ENCODE measurements at regions of chr21 and their contacts with region 1.

Region 1: GRCh38 chr21:41283211-41283818 is 33.3 kb upstream of the FAM3B start:
- DNase-seq: peak; percentile 72
- ATAC-seq: peak; percentile 92
- H3K4me3 Mint-ChIP-seq: no peak overlapping the region
- H3K27ac Mint-ChIP-seq: no peak overlapping the region
- H3K4me1 Mint-ChIP-seq: no peaks in the 10 kb centered on the region
- H3K27me3 Mint-ChIP-seq: peaks cover 14% of the 10 kb centered on the region

Region 2: GRCh38 chr21:41064334-41064791 is 219.0 kb before region 1 on chr21:
- CTCF ChIA-PET with region 1: no interaction called
- POLR2A ChIA-PET with region 1: no interaction called
- DNase-seq: no peak
- ATAC-seq: no peak
- H3K4me3 Mint-ChIP-seq: no peak overlapping the region
- H3K27ac Mint-ChIP-seq: no peak overlapping the region
- H3K4me1 Mint-ChIP-seq: peaks cover 7% of the 10 kb centered on the region
- H3K27me3 Mint-ChIP-seq: peaks cover 14% of the 10 kb centered on the region

Region 3: GRCh38 chr21:41294539-41295231 is 11.4 kb after region 1 on chr21:
- CTCF ChIA-PET with region 1: interaction called, 18 read pairs
- POLR2A ChIA-PET with region 1: no interaction called
- DNase-seq: no peak
- ATAC-seq: no peak
- H3K4me3 Mint-ChIP-seq: no peak overlapping the region
- H3K27ac Mint-ChIP-seq: no peak overlapping the region
- H3K4me1 Mint-ChIP-seq: peaks cover 13% of the 10 kb centered on the region
- H3K27me3 Mint-ChIP-seq: peaks cover 33% of the 10 kb centered on the region

Region 4: GRCh38 chr21:41361786-41362604 is 78.7 kb after region 1 on chr21 and contains the start of gene MX2:
- CTCF ChIA-PET with region 1: interaction called, 19 read pairs
- POLR2A ChIA-PET with region 1: no interaction called
- DNase-seq: peak; percentile 91
- ATAC-seq: peak; percentile 84
- H3K4me3 Mint-ChIP-seq: peak within 1 kb of the TSS; percentile 89
- H3K27ac Mint-ChIP-seq: peak within 1 kb of the TSS; percentile 100
- H3K4me1 Mint-ChIP-seq: peaks cover 76% of the 10 kb centered on the region
- H3K27me3 Mint-ChIP-seq: no peaks in the 10 kb centered on the region
- total RNA-seq, gene MX2: 56.0 to 58.6 TPM

Region 5: DNA sequence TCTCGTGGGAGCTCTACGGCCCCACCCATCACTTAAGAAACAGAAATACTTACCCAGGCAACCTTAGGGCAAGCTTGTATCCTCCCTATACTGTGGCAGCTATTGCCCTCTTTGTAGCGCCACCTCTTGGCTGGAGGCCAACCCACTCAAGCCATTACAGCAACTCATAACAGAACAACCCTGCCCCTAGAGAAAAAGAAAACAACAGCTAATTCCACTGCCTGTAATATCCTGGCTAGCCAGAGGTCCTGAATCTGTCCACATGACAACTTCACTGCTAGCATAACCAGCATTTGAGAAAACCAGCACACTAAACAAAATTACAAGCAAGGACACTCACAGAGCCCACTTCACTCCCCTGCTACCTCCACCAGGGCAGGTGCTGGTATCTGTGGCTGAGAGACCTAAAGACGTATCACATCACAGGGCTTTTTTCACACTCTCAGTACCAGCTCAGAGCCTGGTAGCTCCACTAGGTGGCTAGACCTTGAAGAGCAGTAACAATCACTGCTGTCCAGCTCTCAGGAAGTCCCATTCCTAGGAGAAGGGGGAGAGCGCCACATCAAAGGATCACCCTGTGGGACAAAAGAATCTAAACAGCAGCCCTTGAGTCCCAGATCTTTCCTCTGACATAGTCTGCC is 128.3 kb after region 1 on chr21:
- CTCF ChIA-PET with region 1: interaction called, 24 read pairs
- POLR2A ChIA-PET with region 1: no interaction called
- DNase-seq: no peak
- ATAC-seq: peak; percentile 53
- H3K4me3 Mint-ChIP-seq: no peak overlapping the region
- H3K27ac Mint-ChIP-seq: no peak overlapping the region
- H3K4me1 Mint-ChIP-seq: peaks cover 14% of the 10 kb centered on the region
- H3K27me3 Mint-ChIP-seq: peaks cover 22% of the 10 kb centered on the region

Region 6: DNA sequence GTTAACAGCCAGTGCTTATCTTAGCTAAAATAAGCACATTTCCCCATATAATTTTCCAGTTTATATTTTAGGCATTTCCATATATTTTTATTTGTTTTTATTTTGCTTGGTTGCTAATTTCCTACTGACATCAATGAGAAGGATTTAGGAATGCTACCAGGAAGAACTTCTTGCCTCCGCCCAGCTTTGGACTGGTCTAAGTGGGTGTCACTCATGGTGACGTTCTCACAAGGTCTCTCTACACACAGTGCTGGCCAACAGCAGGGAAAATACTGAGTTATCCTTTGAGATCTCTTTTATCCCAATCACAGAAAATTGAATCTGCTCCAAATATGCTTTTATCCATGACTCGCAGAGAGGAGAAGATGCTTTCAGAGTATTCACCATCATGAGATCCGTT is 155.9 kb after region 1 on chr21:
- CTCF ChIA-PET with region 1: interaction called, 12 read pairs
- POLR2A ChIA-PET with region 1: interaction called, 4 read pairs
- DNase-seq: no peak
- ATAC-seq: no peak
- H3K4me3 Mint-ChIP-seq: no peak overlapping the region
- H3K27ac Mint-ChIP-seq: no peak overlapping the region
- H3K4me1 Mint-ChIP-seq: peaks cover 52% of the 10 kb centered on the region
- H3K27me3 Mint-ChIP-seq: no peaks in the 10 kb centered on the region

Region 7: GRCh38 chr21:41460578-41461527 is 177.5 kb after region 1 on chr21:
- CTCF ChIA-PET with region 1: interaction called, 32 read pairs
- POLR2A ChIA-PET with region 1: interaction called, 6 read pairs
- DNase-seq: peak; percentile 67
- ATAC-seq: peak; percentile 64
- H3K4me3 Mint-ChIP-seq: no peak overlapping the region
- H3K27ac Mint-ChIP-seq: peak overlapping the region; percentile 31
- H3K4me1 Mint-ChIP-seq: peaks cover 32% of the 10 kb centered on the region
- H3K27me3 Mint-ChIP-seq: no peaks in the 10 kb centered on the region

Region 8: GRCh38 chr21:42117229-42117966 is 834.1 kb after region 1 on chr21:
- CTCF ChIA-PET with region 1: interaction called, 17 read pairs
- POLR2A ChIA-PET with region 1: no interaction called
- DNase-seq: peak; percentile 84
- ATAC-seq: peak; percentile 81
- H3K4me3 Mint-ChIP-seq: peak overlapping the region; percentile 38
- H3K27ac Mint-ChIP-seq: no peak overlapping the region
- H3K4me1 Mint-ChIP-seq: peaks cover 41% of the 10 kb centered on the region
- H3K27me3 Mint-ChIP-seq: peaks cover 49% of the 10 kb centered on the region

Measured in activated CD8-positive, alpha-beta T cell treated with anti-CD3 and anti-CD28 coated beads, Interleukin-2, amount 10 ng/mL, durations not matched to agents 7 days and 5 days (primary cell).